ENCODE measurements at regions of chr17 and their contacts with region 1.

Region 1: DNA sequence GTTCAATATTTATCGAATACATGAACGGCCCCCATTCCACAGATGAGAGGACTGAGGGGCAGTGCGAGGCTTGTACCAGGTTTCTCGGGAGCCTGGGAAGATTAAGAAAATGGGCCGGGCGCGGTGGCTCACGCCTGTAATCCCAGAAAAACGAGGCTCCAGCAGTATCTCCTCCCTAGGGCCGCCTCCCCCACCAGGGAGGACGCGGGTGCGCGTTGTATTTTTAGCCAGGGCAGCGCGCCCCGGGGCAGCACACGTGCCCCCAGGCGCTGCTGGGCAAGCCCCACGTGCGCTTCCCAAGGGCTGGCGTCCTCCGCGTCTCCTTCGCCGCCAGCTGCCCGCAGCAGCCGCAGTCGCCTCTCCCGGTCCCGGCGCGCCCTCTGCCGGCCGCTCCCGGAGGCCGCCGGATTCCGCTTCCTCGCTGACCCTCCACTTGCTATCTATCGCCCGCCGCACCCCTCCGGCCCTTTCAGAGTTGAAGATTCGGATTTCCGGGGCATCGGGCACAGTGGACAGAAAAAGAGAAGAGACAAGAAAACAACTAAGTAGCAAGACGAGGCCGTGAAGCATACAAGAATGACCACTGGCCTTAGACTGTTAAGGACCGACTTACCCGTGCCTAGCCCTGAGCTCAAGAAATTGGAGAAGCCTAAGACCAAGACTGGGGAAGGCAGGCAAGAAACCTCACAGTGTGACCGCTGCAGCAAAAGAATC is 1.9 kb upstream of the YBX2 start:
- DNase-seq: peak; percentile 87
- CTCF ChIP-seq: peak; percentile 93

Region 2: DNA sequence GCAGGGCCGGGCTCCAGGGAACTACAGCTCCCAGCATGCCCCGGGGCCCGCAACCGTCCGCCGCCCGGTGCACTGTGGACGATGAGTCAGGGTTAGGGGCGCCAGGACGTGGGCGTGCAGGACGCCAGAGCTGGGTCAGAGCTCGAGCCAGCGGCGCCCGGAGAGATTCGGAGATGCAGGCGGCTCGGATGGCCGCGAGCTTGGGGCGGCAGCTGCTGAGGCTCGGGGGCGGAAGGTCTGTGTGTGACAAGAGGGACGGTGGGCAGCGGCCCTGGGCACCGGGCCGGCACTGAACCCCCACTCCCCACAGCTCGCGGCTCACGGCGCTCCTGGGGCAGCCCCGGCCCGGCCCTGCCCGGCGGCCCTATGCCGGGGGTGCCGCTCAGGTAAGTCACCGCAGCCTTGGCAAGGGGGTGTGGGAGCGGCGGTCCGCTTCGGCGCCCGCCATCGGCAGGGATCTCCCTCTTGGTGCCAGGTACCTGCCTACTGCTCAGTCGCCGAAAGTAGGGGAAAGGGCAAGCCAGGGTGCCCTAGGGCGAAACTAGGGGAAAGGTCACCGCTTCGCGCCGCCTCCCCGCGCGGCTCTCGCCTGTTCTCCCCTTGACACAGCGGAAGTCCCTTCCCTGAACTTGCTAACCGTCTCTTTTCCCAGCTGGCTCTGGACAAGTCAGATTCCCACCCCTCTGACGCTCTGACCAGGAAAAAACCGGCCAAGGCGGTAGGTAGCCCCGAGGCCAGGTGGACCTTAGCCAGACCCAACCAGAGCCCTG is 76.3 kb before region 1 on chr17 and contains the starts of genes ACADVL and DLG4:
- CTCF ChIA-PET with region 1: interaction called, 31 read pairs
- POLR2A ChIA-PET with region 1: no interaction called
- DNase-seq: peak; percentile 91
- CTCF ChIP-seq: no peak

Region 3: GRCh38 chr17:7266784-7267183 is 29.6 kb before region 1 on chr17:
- CTCF ChIA-PET with region 1: interaction called, 11 read pairs
- POLR2A ChIA-PET with region 1: no interaction called
- DNase-seq: no peak
- CTCF ChIP-seq: no peak

Region 4: GRCh38 chr17:7280519-7281429 is 15.6 kb before region 1 on chr17:
- CTCF ChIA-PET with region 1: interaction called, 80 read pairs
- POLR2A ChIA-PET with region 1: no interaction called
- DNase-seq: peak; percentile 89
- CTCF ChIP-seq: peak; percentile 95

Region 5: GRCh38 chr17:7314719-7315569 is 18.6 kb after region 1 on chr17 and contains the start of gene GPS2:
- CTCF ChIA-PET with region 1: interaction called, 19 read pairs
- POLR2A ChIA-PET with region 1: no interaction called
- DNase-seq: peak; percentile 95
- CTCF ChIP-seq: no peak